Posterior vena cava (tissue), 2 donors: ENCODE measurements at regions of chr1 and their contacts with region 1.

Region 1: DNA sequence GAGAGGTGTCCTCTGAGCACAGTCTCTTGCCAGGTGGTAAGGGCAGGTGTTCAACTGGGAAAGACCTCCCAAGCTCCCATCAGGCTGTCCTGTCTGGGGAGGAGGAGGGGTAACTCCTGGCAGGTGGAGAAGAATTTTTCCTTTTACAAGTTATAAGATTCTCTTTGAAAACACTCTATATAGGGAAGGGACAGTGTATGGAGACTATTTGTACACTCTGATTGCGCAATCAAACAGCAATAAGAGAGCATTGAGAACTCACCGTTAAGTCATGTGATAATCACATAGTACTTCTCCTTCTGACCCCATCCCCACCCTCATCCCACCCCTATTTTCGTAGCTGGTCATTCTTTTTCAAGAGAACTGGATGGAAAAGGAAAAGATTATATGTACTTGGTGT is 179.3 kb upstream of the ZNF644 start:
- DNase-seq: no peak

Region 2: DNA sequence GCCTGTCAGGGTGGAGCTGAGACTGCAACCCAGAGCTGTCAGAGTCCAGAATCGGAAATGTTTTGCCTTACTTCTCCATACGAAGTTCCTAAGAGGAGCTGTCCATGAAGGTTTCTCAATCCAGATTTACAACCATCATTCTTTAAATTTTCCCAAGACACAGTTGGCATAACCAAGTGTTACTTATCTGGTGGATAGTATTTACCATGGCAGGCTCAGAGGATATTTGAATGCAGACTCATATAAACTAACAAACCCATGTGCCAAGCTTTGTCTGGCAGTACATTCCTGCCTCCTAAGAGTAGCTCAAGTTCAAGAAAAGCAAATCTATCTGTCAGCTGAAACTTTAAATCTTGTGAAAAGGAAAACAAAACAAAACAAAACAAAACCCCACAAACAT is 938.4 kb before region 1 on chr1:
- intact Hi-C with region 1: no loop called
- DNase-seq: no peak

Region 3: DNA sequence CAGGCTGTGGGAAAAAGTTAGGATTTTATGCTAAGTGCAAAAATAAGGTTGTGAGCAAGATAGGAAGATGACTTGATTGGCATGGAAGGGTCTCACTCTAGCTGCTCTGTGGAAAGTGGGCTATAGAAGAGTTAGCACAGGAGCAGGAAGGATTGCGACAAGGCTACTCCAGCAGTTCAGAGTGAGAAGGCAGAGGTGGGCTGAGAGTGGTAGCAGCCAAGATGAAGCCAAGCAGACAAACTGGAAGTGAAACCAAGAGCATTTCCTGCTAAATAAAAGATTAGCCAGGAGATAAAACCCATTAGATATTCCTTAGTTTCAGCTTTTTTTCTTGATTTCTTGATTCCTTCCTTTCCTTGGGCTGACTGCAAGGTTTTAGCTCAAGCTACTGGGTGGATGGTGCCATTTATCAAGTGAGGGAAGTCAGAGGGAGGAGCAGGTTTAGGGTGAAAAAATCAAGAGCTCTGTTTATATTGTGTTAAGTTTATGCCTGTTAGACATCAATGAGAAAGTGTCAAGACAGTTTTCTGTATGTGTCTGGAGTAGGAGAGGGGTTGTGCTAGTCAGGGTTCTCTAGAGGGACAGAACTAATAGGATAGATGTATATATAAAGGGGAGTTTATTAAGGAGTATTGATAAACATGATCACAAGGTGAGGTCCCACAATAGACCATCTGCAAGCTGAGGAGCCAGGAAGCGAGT is 146.2 kb before region 1 on chr1:
- intact Hi-C with region 1: no loop called
- DNase-seq: no peak

Region 4: GRCh38 chr1:91133248-91133647 is 67.9 kb before region 1 on chr1:
- intact Hi-C with region 1: loop called in 1 of 2 experiments (anchors 2 kb)
- DNase-seq: no peak